ENCODE measurements at regions of chr20 and their contacts with region 1.

Region 1: DNA sequence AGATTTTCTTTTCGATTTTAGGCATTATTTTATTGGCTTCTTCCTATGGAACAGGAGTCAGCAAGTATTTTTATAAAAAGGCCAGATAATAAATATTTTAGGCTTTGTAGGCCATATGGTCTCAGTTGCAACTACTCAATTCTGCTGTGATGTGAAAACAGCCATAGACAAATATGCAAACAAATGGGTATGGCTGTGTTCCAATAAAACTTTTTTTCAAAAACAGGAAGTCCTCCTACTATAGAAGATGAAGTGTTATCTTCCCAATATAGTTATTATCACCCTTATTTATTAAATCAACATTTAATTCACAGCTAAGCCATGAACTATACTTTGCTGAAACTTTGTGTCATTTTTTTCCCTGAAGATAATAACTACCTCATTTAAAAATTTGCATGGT is 57.2 kb downstream of the CHD6 start:
- DNase-seq: no peak
- H3K4me3 ChIP-seq: no peak overlapping the region
- CTCF ChIP-seq: no peak

Region 2: GRCh38 chr20:41533537-41534136 is 27.3 kb before region 1 on chr20:
- CTCF ChIA-PET with region 1: no interaction called
- POLR2A ChIA-PET with region 1: no interaction called
- DNase-seq: no peak
- H3K4me3 ChIP-seq: no peak overlapping the region
- CTCF ChIP-seq: no peak

Region 3: GRCh38 chr20:41572010-41572560 is 11.1 kb after region 1 on chr20:
- CTCF ChIA-PET with region 1: interaction called, 15 read pairs
- POLR2A ChIA-PET with region 1: no interaction called
- DNase-seq: no peak
- H3K4me3 ChIP-seq: no peak overlapping the region
- CTCF ChIP-seq: peak; percentile 5